ENCODE measurements at regions of chr21 and their contacts with region 1.

Region 1: DNA sequence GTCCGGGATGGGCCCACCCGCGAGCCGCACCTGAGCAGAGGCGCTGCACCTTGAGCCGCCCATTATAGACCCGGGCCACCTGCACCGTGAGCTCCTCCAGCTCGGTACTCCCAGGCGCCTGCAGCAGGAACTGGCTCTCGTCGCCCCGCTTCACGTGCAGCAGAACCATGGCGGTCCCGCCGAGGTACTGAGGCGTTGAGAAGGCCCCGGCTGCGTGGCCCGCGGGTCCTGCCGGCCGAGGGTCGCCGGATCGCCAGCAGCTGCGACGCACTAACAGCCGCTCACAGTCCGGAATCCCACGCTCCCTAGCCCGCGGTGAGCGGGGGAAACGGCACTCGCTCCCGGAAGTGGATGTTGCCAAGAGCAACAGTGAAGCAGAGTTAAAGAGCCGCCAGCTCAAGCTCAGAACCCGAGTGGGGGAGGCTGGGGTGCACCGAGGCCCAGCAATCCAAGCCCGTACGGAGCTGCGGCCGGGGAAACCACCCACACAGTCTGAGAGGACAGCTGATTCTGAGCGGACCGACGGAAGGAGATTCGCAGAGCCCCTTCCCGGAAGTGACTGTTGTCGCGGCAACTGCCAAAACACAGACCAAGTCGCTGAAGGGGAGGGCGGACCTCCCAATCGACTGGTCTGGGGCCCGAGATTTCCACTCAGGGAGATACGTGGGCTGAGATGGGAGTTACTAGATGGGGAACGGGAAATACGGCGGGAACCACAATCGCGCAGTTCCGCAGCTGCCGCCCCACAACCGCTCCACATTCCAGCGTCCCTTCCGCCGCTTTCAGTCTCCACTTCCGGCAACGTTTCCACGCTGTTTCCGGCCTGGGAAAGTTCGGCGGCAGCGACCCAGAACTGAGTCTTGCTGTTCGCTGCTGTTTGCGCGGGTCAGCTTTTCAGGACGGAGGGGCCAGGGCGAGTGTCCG is at the start of gene CFAP298:
- DNase-seq: peak; percentile 73
- ATAC-seq: peak; percentile 96
- H3K4me3 ChIP-seq: peak within 1 kb of the TSS; percentile 92 to 93
- H3K27ac ChIP-seq: peak within 1 kb of the TSS; percentile 91
- H3K4me1 ChIP-seq: no peaks in the 10 kb centered on the region; the same call in none of the 2 replicates
- H3K27me3 ChIP-seq: no peaks in the 10 kb centered on the region
- CTCF ChIP-seq: no peak
- total RNA-seq, gene CFAP298: 42.0 TPM

Region 2: DNA sequence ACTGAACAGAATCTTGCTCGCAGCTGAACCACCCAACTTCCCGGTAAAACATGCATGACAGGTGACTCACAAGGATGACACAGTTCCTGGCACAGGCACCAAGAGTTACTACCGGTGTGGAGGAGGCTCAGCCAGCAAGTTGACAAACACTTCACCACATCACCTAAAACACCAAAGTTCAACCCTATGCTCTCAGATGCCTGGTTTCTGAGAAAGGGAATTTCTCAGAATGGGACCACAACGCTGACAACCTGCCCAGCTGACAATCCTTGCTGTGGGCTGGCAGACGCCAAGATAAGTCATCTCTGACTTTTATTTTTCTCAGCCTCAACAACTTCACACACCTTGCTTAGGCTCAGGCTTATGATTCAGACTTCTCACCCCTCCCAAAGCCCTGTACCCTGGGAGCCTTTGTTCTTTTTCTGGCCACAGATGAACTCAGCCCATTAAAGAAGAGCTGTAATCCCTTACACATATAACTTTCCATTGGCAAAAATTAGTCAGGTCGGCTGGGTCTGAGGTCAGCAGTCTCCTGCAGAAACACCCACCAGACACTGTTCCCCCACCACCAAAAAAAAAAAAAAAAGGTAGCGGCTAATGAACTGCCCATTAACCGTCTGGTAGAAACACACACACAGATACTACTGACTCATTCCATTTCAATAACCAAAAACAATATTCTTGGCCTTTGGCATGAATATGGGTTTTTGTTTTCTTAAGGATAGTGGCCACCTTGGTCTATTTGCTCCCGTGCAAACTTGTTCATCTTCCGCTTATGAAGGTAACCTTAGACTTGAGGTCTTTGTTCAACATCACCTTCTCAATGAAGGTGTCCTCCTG is 1257.5 kb before region 1 on chr21:
- CTCF ChIA-PET with region 1: no interaction called
- POLR2A ChIA-PET with region 1: no interaction called
- in situ Hi-C with region 1: no loop called
- intact Hi-C with region 1: no loop called
- DNase-seq: peak; percentile 98
- ATAC-seq: peak; percentile 86
- H3K4me3 ChIP-seq: peak overlapping the region in 1 of 2 experiments; percentile 11; a peak in 1 of 4 replicates
- H3K27ac ChIP-seq: no peak overlapping the region
- H3K4me1 ChIP-seq: no peaks in the 10 kb centered on the region
- H3K27me3 ChIP-seq: no peaks in the 10 kb centered on the region
- CTCF ChIP-seq: no peak

Region 3: DNA sequence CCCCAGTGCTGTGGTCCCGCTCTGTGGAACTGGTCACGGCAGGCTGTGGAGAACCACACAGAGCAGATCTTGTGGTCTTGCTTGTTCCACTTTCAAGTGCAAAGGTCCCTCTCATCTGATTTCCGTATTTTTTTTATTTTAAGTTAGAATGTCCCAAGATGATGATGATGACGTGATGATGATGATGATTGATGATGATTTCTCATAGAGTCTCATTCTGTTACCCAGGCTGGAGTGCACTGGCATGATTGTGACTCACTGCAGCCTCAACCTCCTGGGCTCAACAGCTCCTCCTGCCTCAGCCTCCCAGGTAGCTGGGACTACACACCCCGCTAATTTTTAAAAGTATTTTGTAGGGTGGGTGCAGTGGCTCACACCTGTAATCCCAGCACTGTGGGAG is 187.7 kb before region 1 on chr21:
- CTCF ChIA-PET with region 1: no interaction called
- POLR2A ChIA-PET with region 1: interaction called, 17 read pairs
- in situ Hi-C with region 1: no loop called
- intact Hi-C with region 1: no loop called
- DNase-seq: no peak
- ATAC-seq: no peak
- H3K4me3 ChIP-seq: no peak overlapping the region
- H3K27ac ChIP-seq: no peak overlapping the region
- H3K4me1 ChIP-seq: no peaks in the 10 kb centered on the region
- H3K27me3 ChIP-seq: no peaks in the 10 kb centered on the region
- CTCF ChIP-seq: no peak

Measured in Panc1 (cell line).